ENCODE measurements at regions of chr1 and their contacts with region 1.

Region 1: DNA sequence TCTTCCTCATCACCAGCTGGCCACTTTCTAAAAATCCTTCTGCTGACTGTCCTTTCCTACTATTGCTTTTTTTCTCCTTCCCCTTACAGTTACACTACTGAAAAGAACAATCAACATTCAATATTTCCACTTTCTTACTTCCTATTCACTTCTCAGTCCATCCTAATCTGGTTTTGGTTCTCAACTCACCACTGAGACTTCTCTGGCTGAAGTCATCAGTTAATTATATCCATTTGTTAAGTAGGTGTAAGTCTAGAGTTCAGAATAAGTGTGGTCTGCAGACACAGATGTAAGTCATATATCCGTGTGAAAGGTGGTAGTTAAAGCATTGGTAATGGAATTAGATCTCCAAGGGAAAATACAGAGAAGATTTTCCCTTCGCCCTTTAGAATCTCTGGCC is 21.4 kb downstream of the PEA15 start:
- DNase-seq: no peak
- H3K4me3 Mint-ChIP-seq: no peak overlapping the region
- H3K27ac Mint-ChIP-seq: no peak overlapping the region
- H3K4me1 Mint-ChIP-seq: no peaks in the 10 kb centered on the region
- H3K27me3 Mint-ChIP-seq: no peaks in the 10 kb centered on the region
- CTCF ChIP-seq: no peak

Region 2: GRCh38 chr1:160144921-160145320 is 81.7 kb before region 1 on chr1:
- CTCF ChIA-PET with region 1: no interaction called
- POLR2A ChIA-PET with region 1: no interaction called
- intact Hi-C with region 1: no loop called
- DNase-seq: no peak
- H3K4me3 Mint-ChIP-seq: no peak overlapping the region
- H3K27ac Mint-ChIP-seq: no peak overlapping the region
- H3K4me1 Mint-ChIP-seq: peaks cover 12% of the 10 kb centered on the region
- H3K27me3 Mint-ChIP-seq: peaks cover 31% of the 10 kb centered on the region
- CTCF ChIP-seq: no peak

Region 3: DNA sequence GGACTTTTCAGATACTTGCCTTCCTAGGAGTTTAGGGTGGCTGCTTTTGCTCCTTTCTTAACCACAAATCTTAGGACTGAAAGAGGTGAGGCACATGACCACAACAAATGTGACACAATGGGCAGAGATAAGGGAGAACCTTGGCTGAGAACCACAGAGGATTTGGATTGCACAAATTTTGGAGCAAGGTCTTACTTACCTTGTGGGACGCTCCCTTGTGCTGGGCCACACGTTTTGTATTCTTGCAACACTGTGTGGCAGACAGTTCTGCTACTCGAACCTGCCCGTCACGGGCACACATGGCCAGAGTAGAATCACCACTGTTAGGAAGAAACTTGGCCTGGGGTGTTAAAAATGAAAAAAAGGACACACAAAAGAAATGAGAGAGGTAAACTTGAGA is 11.8 kb after region 1 on chr1:
- CTCF ChIA-PET with region 1: interaction called, 83 read pairs
- POLR2A ChIA-PET with region 1: interaction called, 13 read pairs
- intact Hi-C with region 1: no loop called
- DNase-seq: no peak
- H3K4me3 Mint-ChIP-seq: no peak overlapping the region
- H3K27ac Mint-ChIP-seq: peak overlapping the region; percentile 39
- H3K4me1 Mint-ChIP-seq: peaks cover 6% of the 10 kb centered on the region
- H3K27me3 Mint-ChIP-seq: no peaks in the 10 kb centered on the region
- CTCF ChIP-seq: no peak

Region 4: GRCh38 chr1:160366731-160367515 is 140.3 kb after region 1 on chr1 and contains the start of gene NHLH1:
- CTCF ChIA-PET with region 1: no interaction called
- POLR2A ChIA-PET with region 1: no interaction called
- intact Hi-C with region 1: no loop called
- DNase-seq: no peak
- H3K4me3 Mint-ChIP-seq: no peak within 1 kb of the TSS
- H3K27ac Mint-ChIP-seq: peak within 1 kb of the TSS; percentile 14
- H3K4me1 Mint-ChIP-seq: peaks cover 5% of the 10 kb centered on the region
- H3K27me3 Mint-ChIP-seq: peaks cover 39% of the 10 kb centered on the region
- CTCF ChIP-seq: no peak
- total RNA-seq, gene NHLH1: 0.12 and 0.20 TPM in 2 replicates